Vagina (tissue), 2 donors: ENCODE measurements at regions of chr11 and their contacts with region 1.

Region 1: DNA sequence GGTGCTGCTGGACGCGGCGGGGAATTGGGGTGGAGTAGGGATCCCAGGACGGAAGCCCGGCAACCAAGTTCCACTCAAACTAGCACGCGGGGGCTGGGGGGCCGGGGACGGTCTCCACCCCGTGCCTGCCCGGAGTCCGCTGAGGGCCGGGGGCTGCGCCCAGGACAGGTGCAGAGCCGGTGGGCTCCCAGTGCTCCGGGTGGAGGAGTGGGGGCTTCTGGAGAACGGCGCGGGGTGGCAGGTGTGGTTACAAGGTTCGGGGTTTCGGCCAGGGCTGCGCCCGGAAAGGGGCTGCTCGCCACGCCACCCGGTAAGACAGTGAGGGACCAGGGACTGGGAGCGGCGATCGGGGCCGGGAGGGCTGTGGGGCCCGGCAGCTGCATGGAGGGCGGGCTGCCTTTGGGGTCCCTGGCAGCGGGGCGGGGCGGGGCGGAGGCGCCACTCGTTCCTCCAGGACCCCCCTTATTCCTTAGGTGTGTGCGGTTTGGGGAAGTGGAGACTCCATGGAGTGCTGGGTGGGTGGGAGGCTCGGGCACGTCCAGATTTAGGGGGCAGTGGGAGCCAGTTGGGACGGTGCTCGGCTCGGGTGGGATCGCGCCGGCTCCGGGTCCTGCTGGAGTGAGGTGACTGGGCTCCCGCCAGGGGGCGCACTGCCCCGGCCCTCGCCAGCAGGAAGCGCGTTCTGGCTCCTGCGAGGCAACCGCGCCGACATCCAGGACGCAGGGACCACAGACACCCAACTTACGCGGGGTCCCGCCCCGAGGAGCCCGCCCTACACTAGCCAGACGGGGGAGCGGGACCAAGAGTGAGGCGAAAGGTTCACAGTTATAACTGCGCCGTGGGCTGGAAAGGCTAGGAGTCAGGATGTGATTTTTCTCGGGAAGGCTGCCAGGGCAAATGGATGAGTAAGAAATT is 868 bp downstream of the TSPAN18 start:
- DNase-seq: no peak
- H3K4me3 ChIP-seq: peak overlapping the region; percentile 52 to 54
- H3K27ac ChIP-seq: peak overlapping the region; percentile 74
- H3K4me1 ChIP-seq: peaks cover 36% of the 10 kb centered on the region
- H3K27me3 ChIP-seq: no peaks in the 10 kb centered on the region
- CTCF ChIP-seq: peak; percentile 52 to 99 (median 80)
- POLR2A ChIP-seq: no peak

Region 2: DNA sequence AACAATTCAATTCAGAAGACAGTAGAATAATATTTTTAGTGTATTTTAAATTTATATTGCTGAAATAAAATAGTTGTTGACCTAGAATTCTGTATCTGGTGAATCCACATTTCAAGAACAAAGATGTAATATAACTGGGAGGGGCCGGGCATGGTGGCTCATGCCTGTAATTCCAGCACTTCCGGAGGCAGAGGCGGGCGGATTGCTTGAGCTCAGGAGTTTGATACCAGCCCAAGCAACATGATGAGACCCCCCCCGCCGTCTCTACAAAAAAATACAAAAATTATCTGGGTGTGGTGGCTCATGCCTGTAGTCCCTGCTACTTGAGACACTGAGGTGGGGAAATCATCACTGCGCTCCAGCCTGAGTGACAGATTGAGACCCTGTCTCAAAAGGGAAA is 89.6 kb before region 1 on chr11:
- intact Hi-C with region 1: no loop called
- DNase-seq: no peak
- H3K4me3 ChIP-seq: no peak overlapping the region
- H3K27ac ChIP-seq: no peak overlapping the region
- H3K4me1 ChIP-seq: peaks cover 12% of the 10 kb centered on the region
- H3K27me3 ChIP-seq: no peaks in the 10 kb centered on the region
- CTCF ChIP-seq: no peak
- POLR2A ChIP-seq: no peak

Region 3: GRCh38 chr11:44766112-44766971 is 38.7 kb after region 1 on chr11:
- intact Hi-C with region 1: loop called (anchors 2 kb)
- DNase-seq: no peak
- H3K4me3 ChIP-seq: no peak overlapping the region
- H3K27ac ChIP-seq: peak overlapping the region; percentile 57
- H3K4me1 ChIP-seq: peaks cover 29% of the 10 kb centered on the region
- H3K27me3 ChIP-seq: no peaks in the 10 kb centered on the region
- CTCF ChIP-seq: no peak
- POLR2A ChIP-seq: no peak

Region 4: DNA sequence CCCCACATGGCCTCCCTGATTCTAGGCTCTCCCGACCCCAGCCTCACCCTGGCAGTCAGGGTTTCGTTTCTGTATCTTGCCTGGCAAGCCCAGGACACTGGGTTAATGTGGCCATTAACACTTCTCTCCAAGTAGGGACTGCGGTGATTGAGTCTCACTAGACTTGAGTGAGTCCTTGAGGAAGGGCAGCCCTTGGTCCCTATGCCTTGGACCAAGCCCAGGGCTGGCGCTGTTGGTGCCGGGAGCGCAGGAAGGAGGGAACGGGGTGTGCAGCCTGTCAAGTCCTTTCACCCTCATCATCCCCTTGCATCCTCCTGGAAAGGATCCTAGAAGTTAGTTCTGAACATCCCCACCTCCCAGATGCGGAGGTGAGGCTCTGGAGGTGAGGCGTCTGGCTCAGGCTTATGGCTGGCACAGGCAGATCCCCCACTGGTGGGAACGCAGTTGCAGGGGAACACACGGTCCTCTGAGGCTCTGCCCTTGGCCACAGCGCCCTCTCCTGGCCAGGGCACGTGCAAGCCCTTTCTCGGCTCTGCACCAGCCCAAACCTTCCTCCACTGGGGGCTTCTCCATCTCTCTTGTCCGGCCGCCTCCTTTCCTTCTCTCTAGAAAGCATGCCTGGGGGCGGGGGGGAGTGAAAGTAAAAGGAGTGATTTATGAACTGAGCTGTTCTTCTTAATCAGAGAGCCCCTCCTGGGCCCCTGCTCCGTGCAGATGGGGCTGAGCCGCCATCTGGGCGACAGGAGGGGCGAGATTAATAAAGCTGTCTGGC is 166.4 kb after region 1 on chr11:
- intact Hi-C with region 1: loop called (anchors 2 kb)
- DNase-seq: no peak
- H3K4me3 ChIP-seq: no peak overlapping the region
- H3K27ac ChIP-seq: peak overlapping the region; percentile 20
- H3K4me1 ChIP-seq: peaks cover 11% of the 10 kb centered on the region
- H3K27me3 ChIP-seq: no peaks in the 10 kb centered on the region
- CTCF ChIP-seq: peak in 2 of 3 experiments; percentile 76 to 86
- POLR2A ChIP-seq: no peak